ENCODE measurements at regions of chr6 and their contacts with region 1.

Region 1: DNA sequence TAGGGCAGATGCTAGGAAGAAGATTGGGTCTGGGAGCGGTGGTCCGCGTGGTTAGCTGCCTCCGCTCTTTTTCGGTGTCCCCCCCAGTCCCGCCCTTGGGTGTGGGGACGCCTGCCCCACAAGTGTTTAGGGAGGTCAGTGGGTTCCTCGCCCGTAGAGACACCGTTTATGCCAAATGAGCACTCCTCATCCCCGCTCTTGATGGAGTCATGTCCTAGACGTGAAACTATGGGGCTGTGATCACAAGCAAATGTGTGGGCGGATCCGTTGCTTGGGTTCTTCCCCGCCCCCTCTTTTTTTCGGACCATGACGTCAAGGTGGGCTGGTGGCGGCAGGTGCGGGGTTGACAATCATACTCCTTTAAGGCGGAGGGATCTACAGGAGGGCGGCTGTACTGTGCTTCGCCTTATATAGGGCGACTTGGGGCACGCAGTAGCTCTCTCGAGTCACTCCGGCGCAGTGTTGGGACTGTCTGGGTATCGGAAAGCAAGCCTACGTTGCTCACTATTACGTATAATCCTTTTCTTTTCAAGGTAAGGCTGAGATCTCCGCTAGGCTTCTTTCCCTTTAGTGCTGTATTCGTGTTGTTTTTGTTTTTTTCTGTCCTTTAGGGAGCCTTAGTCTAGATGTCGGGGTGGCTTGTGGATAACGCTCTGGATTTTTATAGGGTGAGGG is at the start of gene HSP90AB1:
- H3K4me3 ChIP-seq: peak within 1 kb of the TSS; percentile 66
- H3K27ac ChIP-seq: peak within 1 kb of the TSS; percentile 71
- H3K4me1 ChIP-seq: no peaks in the 10 kb centered on the region
- CTCF ChIP-seq: peak; percentile 31; the same call in 1 of the 2 replicates

Region 2: DNA sequence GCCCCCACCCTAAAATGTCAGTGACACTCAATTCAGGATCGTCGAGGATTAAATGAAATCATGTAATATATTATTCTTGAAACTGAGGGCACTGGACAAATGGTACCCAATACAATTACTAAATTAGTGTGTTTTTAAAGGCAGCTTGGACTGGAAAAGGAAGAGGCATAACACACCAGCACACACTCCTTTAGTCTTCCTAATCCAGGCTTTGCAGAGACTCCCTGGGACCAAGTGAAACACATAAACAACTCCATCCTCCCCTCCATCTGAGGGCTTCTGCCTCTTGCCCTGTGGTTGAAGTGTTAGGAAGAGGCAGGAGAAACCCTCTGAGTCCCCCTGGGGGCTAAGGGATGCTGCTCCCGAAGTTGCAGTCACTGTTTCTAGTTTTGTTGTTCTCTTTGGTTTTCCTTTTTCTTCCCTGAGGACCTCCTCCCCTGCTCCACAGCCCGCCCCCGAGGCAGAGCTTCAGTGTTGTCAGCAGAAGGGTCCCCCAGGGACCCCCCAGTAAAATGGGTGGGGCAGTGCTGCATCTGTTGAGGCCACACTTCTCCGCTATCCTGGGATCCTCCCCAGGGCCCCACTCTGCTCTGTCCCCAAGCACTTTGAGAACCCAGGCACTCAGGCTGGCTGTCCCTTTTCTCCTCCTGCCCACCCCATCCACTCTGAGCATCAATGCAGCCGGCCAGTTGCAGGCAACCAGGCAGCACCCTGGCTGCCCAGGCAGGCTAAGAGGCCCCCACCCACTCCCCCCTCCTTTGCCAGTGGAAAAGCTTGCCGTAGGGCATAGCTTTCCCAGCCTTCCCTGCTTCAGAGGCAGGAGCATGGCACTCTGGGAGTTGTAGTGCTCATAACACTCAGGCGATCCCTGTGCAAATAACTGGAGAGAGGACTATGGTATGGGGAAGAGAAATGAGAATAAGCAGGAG is 113.5 kb before region 1 on chr6:
- CTCF ChIA-PET with region 1: no interaction called
- POLR2A ChIA-PET with region 1: interaction called, 18 read pairs
- H3K4me3 ChIP-seq: no peak overlapping the region
- H3K27ac ChIP-seq: no peak overlapping the region
- H3K4me1 ChIP-seq: peaks cover 7% of the 10 kb centered on the region
- CTCF ChIP-seq: peak; percentile 48; the same call in 1 of the 2 replicates

Region 3: DNA sequence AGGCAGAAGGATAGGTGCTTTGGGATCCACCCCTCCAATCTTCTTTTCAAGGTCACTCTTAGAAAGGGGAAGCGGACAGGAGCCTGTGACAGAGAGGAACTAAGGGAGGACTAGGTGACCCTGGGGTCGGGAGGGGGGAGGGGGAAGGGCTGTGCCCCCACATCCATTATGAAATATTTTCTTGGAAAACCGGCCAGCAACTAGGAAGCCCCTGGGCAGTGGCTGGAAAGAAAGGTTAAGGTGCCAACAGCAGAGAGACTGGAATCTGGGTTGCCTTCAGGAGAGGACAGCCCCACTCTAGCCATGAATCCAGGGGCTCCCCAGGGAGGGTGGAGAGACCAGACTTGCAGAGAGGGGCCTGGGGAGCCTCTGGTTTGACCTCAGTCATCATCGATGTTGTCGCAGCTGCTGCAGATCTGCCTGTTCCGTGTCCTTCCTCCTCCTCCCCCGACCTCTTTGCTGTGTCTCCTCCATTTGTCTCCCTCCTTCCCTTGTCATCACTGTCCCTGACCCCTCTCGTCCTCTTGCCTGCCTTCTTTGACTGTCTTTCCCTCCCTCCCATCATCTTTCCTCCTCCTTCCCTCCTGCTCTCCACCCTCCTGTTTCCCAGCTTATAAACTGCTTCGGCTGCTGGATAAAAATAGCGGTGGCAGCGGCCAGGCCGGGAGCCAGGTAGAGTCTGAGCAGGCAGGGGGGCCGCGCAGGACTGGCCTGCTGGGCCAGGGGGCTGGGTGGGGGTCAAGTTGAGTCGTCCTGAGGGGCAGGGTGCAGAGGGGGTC is 20.2 kb before region 1 on chr6:
- CTCF ChIA-PET with region 1: interaction called, 22 read pairs
- POLR2A ChIA-PET with region 1: interaction called, 90 read pairs
- H3K4me3 ChIP-seq: no peak overlapping the region
- H3K27ac ChIP-seq: no peak overlapping the region
- H3K4me1 ChIP-seq: peaks cover 22% of the 10 kb centered on the region
- CTCF ChIP-seq: no peak

Region 4: DNA sequence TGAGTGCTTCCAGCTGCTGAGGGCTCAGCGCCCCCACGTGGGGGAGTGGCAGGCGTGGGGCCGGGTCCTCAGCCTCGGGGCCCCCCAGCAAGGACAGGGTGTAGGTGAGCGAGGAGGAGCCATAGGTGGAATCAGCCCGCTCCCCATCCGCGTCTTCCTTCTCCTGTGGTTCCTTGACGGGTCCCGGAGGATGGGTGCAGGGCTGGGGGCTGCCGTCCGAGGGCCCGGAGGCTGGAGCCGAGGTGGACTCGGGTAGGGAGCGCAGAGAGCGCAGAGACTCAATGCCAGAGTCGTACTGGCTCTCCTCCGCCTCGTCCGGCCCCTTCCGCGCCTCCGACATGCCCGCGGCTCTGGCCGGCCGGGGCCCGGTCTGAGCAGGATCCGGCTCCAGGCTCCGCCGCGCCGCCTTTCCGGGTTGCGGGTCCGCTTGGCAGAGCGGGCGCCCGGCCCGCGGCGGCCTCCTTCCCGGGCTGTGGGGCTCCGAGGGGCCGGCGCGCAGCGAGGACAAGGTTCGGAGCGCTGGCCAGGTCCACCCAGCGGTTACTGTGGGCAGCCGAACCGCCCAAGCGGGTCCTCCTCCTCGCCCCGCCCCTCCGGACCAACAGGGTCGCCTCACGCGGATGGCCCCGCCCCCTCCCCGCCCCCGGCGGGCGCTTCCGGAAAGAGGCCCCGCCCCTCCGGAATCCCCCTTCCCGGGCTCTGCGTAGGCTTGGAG is 18.4 kb after region 1 on chr6 and contains the start of gene NFKBIE:
- CTCF ChIA-PET with region 1: interaction called, 7 read pairs
- POLR2A ChIA-PET with region 1: interaction called, 17 read pairs
- H3K4me3 ChIP-seq: peak within 1 kb of the TSS; percentile 62
- H3K27ac ChIP-seq: peak within 1 kb of the TSS; percentile 76; the same call in 1 of the 2 replicates
- H3K4me1 ChIP-seq: peaks cover 4% of the 10 kb centered on the region; the same call in 1 of the 2 replicates
- CTCF ChIP-seq: peak; percentile 98

Region 5: DNA sequence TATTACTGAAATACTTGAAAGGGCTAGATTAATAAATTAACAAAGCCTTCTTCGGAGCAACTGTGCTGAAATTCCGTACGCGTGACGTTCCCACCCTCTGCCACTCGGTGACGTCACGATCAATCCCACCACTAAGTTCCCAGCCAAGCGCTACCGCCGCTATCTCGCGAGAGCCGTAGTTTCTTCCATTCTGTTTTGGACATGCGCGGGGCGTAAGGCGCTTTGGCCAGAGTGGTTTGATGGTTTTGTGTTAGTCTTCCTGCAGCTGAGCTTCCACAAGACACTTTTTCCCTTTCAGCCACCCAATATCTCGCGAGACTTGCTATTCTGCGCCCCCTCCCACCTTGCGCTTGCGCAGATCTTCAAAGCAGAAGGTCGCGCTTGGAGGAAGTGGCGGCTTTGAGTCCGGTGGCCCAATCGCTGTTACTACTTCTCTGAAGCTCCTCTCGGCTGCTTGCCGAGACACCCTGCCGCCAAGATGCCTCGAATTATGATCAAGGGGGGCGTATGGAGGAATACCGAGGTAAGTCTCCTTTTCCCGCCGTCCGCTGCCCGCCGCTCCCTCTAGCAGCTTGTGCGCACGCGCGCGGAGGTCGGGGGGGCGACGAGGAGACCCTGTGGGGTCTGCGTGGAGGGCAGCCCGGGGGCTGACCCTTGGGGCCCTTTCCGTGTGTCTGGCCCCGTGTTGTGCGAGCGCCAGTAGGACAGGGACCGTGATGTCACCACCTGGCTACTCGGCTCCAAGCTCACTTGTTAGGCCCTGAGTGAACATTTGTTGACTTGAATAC is 140.7 kb after region 1 on chr6 and contains the start of gene CDC5L:
- CTCF ChIA-PET with region 1: no interaction called
- POLR2A ChIA-PET with region 1: interaction called, 13 read pairs
- H3K4me3 ChIP-seq: peak within 1 kb of the TSS; percentile 76
- H3K27ac ChIP-seq: peak within 1 kb of the TSS; percentile 96
- H3K4me1 ChIP-seq: peaks cover 8% of the 10 kb centered on the region
- CTCF ChIP-seq: 0 out of 2 replicates have a peak, but pooled peaks have one; percentile 22

Region 6: GRCh38 chr6:44788387-44788981 is 541.7 kb after region 1 on chr6:
- CTCF ChIA-PET with region 1: no interaction called
- POLR2A ChIA-PET with region 1: no interaction called
- H3K4me3 ChIP-seq: no peak overlapping the region
- H3K27ac ChIP-seq: no peak overlapping the region
- H3K4me1 ChIP-seq: no peaks in the 10 kb centered on the region
- CTCF ChIP-seq: no peak

Measured in HEK293 (cell line).